ENCODE measurements at regions of chr3 and their contacts with region 1.

Region 1: GRCh38 chr3:46089237-46090011 is 62.1 kb upstream of the XCR1 start:
- DNase-seq: peak; percentile 93
- ATAC-seq: peak; percentile 89
- H3K4me3 ChIP-seq: no peak overlapping the region
- H3K27ac ChIP-seq: no peak overlapping the region
- H3K4me1 ChIP-seq: peaks cover 5% of the 10 kb centered on the region
- H3K27me3 ChIP-seq: 0 out of 2 replicates have a peak, but pooled peaks cover 2% of the 10 kb centered on the region
- CTCF ChIP-seq: no peak
- POLR2A ChIP-seq: no peak
- RAD21 ChIP-seq: no peak

Region 2: GRCh38 chr3:46208167-46208704 is 118.8 kb after region 1 on chr3 and contains the start of gene CCR1:
- CTCF ChIA-PET with region 1: interaction called, 8 read pairs
- POLR2A ChIA-PET with region 1: no interaction called
- dilution Hi-C with region 1: no loop called
- in situ Hi-C with region 1: no loop called
- intact Hi-C with region 1: loop called (anchors 2 kb)
- DNase-seq: peak; percentile 10
- ATAC-seq: peak; percentile 51; the same call in 1 of the 2 replicates
- H3K4me3 ChIP-seq: no peak within 1 kb of the TSS
- H3K27ac ChIP-seq: no peak within 1 kb of the TSS
- H3K4me1 ChIP-seq: peaks cover 6% of the 10 kb centered on the region; the same call in 1 of the 2 replicates
- H3K27me3 ChIP-seq: peaks cover 17% of the 10 kb centered on the region
- CTCF ChIP-seq: peak; percentile 35
- POLR2A ChIP-seq: no peak
- RAD21 ChIP-seq: peak; percentile 36
- total RNA-seq, gene CCR1: not detected in 2 replicates

Region 3: DNA sequence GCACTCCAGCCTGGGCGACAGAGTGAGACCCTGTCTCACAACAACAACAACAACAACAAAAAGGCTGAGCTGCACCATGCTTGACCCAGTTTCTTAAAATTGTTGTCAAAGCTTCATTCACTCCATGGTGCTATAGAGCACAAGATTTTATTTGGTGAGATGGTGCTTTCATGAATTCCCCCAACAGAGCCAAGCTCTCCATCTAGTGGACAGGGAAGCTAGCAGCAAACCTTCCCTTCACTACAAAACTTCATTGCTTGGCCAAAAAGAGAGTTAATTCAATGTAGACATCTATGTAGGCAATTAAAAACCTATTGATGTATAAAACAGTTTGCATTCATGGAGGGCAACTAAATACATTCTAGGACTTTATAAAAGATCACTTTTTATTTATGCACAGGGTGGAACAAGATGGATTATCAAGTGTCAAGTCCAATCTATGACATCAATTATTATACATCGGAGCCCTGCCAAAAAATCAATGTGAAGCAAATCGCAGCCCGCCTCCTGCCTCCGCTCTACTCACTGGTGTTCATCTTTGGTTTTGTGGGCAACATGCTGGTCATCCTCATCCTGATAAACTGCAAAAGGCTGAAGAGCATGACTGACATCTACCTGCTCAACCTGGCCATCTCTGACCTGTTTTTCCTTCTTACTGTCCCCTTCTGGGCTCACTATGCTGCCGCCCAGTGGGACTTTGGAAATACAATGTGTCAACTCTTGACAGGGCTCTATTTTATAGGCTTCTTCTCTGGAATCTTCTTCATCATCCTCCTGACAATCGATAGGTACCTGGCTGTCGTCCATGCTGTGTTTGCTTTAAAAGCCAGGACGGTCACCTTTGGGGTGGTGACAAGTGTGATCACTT is 283.3 kb after region 1 on chr3:
- CTCF ChIA-PET with region 1: interaction called, 5 read pairs
- POLR2A ChIA-PET with region 1: no interaction called
- dilution Hi-C with region 1: no loop called
- in situ Hi-C with region 1: loop called (anchors 10 kb)
- intact Hi-C with region 1: loop called (anchors 1 kb)
- DNase-seq: peak; percentile 29
- ATAC-seq: peak; percentile 74
- H3K4me3 ChIP-seq: no peak overlapping the region
- H3K27ac ChIP-seq: no peak overlapping the region
- H3K4me1 ChIP-seq: no peaks in the 10 kb centered on the region
- H3K27me3 ChIP-seq: peaks cover 54% of the 10 kb centered on the region
- CTCF ChIP-seq: peak; percentile 61
- POLR2A ChIP-seq: no peak
- RAD21 ChIP-seq: peak; percentile 58

Region 4: GRCh38 chr3:46378426-46378942 is 289.1 kb after region 1 on chr3:
- CTCF ChIA-PET with region 1: interaction called, 5 read pairs
- POLR2A ChIA-PET with region 1: no interaction called
- dilution Hi-C with region 1: no loop called
- in situ Hi-C with region 1: loop called (anchors 10 kb)
- intact Hi-C with region 1: loop called (anchors 1 kb)
- DNase-seq: peak; percentile 40
- ATAC-seq: peak; percentile 72
- H3K4me3 ChIP-seq: no peak overlapping the region
- H3K27ac ChIP-seq: no peak overlapping the region
- H3K4me1 ChIP-seq: no peaks in the 10 kb centered on the region
- H3K27me3 ChIP-seq: peaks cover 48% of the 10 kb centered on the region
- CTCF ChIP-seq: peak; percentile 66
- POLR2A ChIP-seq: no peak
- RAD21 ChIP-seq: peak; percentile 77

Region 5: GRCh38 chr3:46423588-46423987 is 334.2 kb after region 1 on chr3:
- CTCF ChIA-PET with region 1: no interaction called
- POLR2A ChIA-PET with region 1: no interaction called
- dilution Hi-C with region 1: no loop called
- in situ Hi-C with region 1: no loop called
- intact Hi-C with region 1: loop called (anchors 5 kb)
- DNase-seq: peak; percentile 34
- ATAC-seq: no peak
- H3K4me3 ChIP-seq: no peak overlapping the region
- H3K27ac ChIP-seq: no peak overlapping the region
- H3K4me1 ChIP-seq: no peaks in the 10 kb centered on the region
- H3K27me3 ChIP-seq: peaks cover 13% of the 10 kb centered on the region
- CTCF ChIP-seq: no peak
- POLR2A ChIP-seq: no peak
- RAD21 ChIP-seq: no peak

Region 6: DNA sequence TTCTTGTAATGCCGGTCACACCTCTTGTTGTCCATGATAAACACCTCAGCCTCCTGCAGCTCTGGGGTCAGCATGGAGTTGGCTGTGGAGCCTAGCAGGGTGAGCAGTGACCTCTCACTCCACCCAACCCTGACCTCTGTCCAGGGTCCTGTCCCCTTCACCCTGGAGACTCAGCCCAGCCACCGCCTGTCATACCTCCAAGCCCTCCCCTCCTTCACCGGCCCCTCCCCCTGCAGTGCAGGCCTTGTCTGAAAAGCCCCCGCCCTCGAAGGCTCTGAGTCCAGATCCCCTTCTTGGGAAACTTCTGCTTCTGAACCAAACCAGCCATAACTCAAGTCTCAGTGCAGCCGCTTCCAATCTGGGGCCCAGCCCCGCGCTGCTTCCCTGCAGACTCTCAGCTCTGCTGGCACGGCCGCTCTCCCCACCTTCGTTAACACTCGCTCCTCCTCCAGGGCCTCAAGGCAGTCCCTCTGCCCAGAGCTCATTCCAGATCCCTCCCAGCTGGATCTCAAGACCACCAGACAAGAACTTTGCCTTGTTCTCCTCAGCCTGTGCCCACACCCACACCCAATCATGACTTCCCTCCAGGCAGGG is 653.7 kb after region 1 on chr3:
- CTCF ChIA-PET with region 1: no interaction called
- POLR2A ChIA-PET with region 1: no interaction called
- dilution Hi-C with region 1: no loop called
- in situ Hi-C with region 1: no loop called
- intact Hi-C with region 1: no loop called
- DNase-seq: no peak
- ATAC-seq: no peak
- H3K4me3 ChIP-seq: no peak overlapping the region
- H3K27ac ChIP-seq: no peak overlapping the region
- H3K4me1 ChIP-seq: no peaks in the 10 kb centered on the region
- H3K27me3 ChIP-seq: peaks cover 24% of the 10 kb centered on the region
- CTCF ChIP-seq: no peak
- POLR2A ChIP-seq: no peak
- RAD21 ChIP-seq: no peak